Head of caudate nucleus (tissue), 42 donors: ENCODE measurements at regions of chr11 and their contacts with region 1.

Region 1: DNA sequence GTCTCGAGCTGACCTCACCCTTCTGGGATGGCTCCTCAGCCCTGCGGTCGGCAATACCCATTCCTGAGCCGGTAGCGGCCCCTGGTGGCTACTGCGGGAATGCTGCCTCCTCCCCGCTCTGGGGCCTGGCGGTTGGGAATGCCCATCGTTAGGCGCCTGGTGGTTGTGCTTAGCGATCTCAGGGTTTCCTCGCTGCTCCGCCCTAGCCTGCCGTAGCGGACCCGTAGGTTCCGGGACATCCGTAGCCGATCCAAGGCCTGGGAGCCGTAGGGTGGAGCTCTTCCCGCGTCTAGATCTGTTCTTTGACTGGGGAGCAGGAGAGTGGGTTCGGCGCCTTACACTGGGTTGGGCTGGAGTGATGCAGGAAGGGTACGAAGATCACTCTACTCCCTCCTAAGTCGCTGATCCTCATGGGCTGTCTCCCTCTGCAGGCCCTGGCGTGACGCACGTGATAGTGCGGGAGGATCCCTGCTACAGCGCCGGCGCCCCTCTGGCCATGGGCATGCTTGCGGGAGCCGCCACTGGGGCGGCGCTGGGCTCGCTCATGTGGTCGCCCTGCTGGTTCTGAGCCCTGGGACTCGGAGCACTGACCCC is 14.8 kb downstream of the PLEKHB1 start:
- DNase-seq: peak; percentile 80 to 98 (median 94)

Region 2: GRCh38 chr11:73393479-73394380 is 267.4 kb before region 1 on chr11:
- intact Hi-C with region 1: no loop called
- DNase-seq: peak; percentile 62 to 92 (median 82)

Region 3: DNA sequence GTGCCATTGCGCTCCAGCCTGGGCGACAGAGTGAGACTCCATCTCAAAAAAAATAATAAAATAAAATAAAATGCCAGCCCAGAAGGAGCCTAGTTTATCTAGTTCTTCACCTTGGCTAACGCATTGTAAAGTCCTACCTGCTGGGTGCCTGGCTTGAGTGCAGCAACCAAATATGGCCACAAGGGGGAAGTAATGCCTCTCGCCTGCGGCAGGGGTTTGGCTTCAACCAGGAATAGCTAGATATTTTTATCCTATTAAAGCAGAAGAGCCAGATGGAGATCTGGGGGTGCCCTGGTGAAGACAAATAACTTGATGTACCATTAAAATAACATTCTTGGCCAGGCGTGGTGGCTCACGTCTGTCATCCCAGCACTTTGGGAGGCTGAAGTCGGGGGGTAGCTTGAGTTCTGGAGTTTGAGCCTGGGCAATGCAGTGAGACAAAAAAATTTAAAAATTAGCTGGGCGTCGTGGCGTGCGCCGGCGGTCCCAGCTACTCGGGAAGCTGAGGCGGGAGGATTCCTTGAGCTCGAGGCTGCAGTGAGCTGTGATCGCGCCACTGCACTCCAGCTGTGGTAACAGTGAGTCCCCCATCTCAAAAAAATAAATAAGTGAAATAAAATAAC is 35.3 kb before region 1 on chr11:
- intact Hi-C with region 1: loop called (anchors 2 kb)
- DNase-seq: peak; percentile 69 to 94 (median 87)

Region 4: GRCh38 chr11:73734993-73735392 is 73.9 kb after region 1 on chr11:
- intact Hi-C with region 1: no loop called
- DNase-seq: no peak

Region 5: GRCh38 chr11:73902303-73902702 is 241.2 kb after region 1 on chr11:
- intact Hi-C with region 1: no loop called
- DNase-seq: no peak